ENCODE measurements at regions of chr3 and their contacts with region 1.

Region 1: DNA sequence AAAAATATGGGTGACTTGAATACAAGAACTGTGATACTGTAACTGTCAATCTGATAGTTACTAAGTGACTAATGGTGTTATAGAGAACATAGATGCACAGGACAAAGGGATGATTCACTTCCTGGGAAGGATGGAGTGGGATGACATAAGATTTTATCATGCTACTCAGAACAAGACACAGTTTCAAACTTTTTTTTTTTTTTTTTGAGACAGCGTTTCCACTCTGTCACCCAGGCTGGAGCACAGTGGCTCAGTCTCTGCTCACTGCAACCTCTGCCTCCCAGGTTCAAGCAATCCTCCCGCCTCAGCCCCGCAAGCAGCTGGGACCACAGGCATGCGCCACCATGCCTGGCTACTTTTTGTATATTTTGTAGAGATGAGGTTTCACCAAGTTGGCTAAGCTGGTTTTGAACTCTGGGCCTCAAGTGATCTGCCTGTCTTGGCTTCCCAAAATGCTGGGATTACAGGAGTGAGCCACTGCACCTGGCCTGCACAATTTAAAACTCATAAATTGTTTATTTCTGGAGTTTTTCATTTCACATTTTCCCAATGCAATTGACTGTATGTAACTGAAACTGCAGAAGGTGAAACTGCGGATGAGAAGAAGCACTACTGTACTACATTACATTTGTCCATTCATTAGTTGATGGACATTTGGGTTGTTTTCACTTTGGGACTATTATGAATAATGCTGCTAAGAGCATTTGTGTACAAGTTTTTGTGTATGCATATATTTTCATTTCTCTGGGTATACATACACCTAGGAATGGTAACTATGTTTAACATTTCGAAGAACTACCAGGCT is 40.6 kb downstream of the ADIPOQ start:
- DNase-seq: peak; percentile 31
- H3K4me3 Mint-ChIP-seq: peak overlapping the region; percentile 54
- H3K27ac Mint-ChIP-seq: peak overlapping the region; percentile 90
- H3K4me1 Mint-ChIP-seq: peaks cover 58% of the 10 kb centered on the region
- H3K27me3 Mint-ChIP-seq: no peaks in the 10 kb centered on the region

Region 2: GRCh38 chr3:186472456-186473008 is 410.6 kb before region 1 on chr3:
- intact Hi-C with region 1: no loop called
- DNase-seq: no peak
- H3K4me3 Mint-ChIP-seq: no peak overlapping the region
- H3K27ac Mint-ChIP-seq: no peak overlapping the region
- H3K4me1 Mint-ChIP-seq: peaks cover 17% of the 10 kb centered on the region
- H3K27me3 Mint-ChIP-seq: peaks cover 5% of the 10 kb centered on the region

Region 3: DNA sequence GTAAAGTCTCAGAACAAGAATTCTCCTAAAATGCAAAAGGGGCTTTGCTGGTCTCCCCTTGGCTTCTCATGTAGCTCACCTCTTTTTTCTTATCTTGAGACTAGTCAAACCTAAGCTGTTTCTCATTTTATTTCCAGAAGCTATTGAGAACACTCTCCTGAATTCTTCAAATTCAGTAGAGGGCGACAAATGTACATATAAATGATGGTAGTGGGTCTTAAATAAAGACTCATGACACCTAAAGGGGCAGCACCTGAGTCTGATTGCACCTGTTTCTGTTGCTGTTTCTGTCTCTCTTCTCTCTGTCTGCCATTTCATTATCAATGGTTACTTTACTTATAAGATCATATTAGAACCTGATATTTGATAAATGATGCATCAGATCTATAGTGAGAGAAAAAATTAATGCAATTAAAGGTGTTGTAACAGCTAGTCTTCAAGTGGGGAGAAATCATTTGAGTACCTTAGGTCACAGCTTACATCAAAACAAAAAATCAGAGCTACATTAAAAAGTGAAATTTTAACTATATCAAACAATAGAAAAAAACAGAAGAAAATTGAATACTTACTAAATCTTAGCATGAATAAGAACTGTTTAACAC is 33.6 kb before region 1 on chr3:
- intact Hi-C with region 1: loop called (anchors 1 kb)
- DNase-seq: no peak
- H3K4me3 Mint-ChIP-seq: no peak overlapping the region
- H3K27ac Mint-ChIP-seq: no peak overlapping the region
- H3K4me1 Mint-ChIP-seq: peaks cover 26% of the 10 kb centered on the region
- H3K27me3 Mint-ChIP-seq: peaks cover 13% of the 10 kb centered on the region

Region 4: DNA sequence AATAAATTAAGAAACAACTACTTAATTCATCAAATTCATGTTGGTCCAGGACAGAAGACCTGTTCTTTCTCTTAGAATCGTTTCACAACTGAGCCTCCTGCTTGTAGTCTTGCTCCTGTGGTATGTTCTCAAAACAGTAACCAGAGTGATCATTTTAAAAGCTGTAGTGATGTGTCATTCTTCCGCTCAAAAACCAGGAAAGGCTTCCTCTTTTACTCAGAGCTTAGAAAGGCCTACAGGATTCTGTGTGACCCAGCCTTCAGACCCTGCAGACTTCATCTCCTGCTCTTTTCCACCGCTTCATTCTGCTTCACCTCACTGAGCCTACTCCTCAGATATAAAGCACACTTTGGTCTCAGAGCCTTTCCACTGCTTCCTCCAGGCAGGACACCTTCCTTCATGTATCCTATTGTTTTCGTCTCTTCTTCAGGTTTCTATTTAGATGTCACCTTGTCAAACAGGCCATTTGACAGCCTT is 70.0 kb after region 1 on chr3:
- intact Hi-C with region 1: loop called (anchors 1 kb)
- DNase-seq: peak; percentile 16
- H3K4me3 Mint-ChIP-seq: peak overlapping the region; percentile 59
- H3K27ac Mint-ChIP-seq: peak overlapping the region; percentile 89
- H3K4me1 Mint-ChIP-seq: peaks cover 83% of the 10 kb centered on the region
- H3K27me3 Mint-ChIP-seq: no peaks in the 10 kb centered on the region

Region 5: DNA sequence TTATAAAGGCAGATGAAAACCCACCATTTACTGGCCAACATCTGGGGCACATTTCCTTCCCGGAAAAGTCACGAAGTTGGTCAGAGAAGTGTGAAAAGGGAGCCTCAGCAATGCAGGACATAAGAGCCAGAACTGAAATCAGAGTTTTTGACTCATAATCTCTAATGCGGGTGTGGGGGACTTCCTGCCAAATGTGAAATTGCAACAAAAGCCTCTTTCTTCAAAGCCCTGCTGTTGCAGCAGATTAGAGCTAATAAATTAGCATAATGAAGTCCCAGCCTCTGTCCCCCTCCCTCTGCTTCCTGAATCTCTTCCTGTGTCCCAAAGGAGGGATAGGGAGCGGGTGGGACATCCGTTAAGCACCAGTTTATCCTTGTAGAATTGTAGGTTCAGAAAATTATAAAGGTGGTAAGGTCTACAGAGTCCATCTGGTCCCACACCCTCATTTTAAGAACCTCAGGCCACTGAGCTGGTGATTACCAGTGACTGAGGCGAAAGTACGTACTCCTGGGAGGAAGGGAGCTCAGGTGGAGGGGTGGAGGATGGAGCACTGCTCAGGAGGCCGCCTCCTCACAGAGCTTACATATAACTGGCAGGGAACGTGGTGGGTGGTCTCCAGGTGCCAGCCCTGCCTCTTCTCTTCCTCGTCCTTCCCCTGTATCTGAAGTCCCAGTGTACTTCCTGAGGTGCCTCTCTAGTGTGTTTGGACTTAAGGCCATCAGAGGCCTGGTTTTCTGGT is 82.2 kb after region 1 on chr3:
- intact Hi-C with region 1: no loop called
- DNase-seq: no peak
- H3K4me3 Mint-ChIP-seq: no peak overlapping the region
- H3K27ac Mint-ChIP-seq: no peak overlapping the region
- H3K4me1 Mint-ChIP-seq: peaks cover 65% of the 10 kb centered on the region
- H3K27me3 Mint-ChIP-seq: no peaks in the 10 kb centered on the region

Region 6: DNA sequence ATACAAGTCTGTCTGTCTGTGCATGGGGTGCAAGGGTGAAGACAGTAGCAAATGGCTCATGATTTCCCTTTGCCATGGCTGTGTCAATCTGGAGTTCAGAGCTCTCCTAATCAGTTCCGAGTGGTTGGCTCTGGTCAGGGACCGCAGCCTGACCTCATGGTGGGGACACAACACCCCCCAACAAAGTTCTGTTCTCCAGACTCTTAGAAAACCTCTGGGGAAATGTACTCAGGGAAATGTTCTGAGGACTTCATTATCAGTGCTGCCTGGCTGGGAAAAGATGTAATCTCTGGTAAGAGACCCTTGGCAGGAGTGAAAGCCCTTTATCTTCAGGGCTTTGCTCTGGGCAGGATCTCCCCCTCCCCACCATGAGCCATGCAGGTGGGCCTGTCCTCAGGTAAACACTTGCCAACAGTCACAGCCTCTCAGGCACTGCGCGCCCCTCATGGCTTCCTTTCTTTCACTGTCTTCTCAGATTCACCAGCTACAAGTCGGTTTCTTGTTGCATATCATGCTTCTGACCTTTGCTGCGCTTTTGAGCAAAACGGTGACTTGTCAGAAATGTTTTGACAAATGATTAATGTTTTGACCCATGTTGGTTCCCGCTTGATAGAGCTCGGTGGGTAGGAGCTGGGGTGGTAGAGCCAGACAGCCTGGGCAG is 142.7 kb after region 1 on chr3:
- intact Hi-C with region 1: loop called (anchors 1 kb)
- DNase-seq: no peak
- H3K4me3 Mint-ChIP-seq: peak overlapping the region; percentile 85
- H3K27ac Mint-ChIP-seq: peak overlapping the region; percentile 97
- H3K4me1 Mint-ChIP-seq: peaks cover 59% of the 10 kb centered on the region
- H3K27me3 Mint-ChIP-seq: no peaks in the 10 kb centered on the region

Region 7: DNA sequence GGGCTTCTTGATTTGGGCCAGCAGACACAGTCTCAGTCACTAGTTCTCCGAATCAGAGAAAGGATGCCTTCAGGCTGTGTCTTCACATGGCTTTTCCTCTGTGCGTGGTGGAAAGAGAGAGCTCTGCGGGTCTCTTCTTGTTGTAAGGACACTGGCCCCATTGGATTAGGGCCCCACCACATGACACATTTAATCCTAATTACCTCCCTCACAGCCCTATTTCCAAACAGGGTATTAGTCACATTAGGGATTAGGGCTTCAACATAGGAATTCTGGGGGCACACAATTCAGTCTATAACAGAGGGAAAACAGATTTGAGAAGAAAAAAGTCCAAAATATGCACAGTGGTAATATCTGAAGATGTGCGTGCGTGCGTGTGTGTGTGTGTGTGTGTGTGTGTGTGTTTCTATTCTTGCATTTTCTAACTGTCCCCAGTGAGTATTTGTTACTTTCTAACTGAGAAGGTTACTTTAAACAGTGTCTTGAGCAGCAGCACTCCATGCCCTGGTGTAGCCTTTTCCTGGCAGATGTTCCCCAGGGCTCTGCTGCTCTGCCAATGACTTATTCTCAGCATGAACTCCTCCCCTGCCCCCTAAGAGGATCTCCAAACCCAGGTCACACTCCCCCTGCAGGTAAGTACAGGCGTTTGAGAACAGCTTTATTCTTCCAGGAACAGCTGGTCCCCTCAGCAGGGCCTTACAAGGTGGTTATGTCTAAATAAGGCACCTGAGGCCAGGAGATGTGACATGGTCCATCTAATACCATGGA is 183.3 kb after region 1 on chr3:
- intact Hi-C with region 1: no loop called
- DNase-seq: peak; percentile 29
- H3K4me3 Mint-ChIP-seq: no peak overlapping the region
- H3K27ac Mint-ChIP-seq: peak overlapping the region; percentile 67
- H3K4me1 Mint-ChIP-seq: peaks cover 55% of the 10 kb centered on the region
- H3K27me3 Mint-ChIP-seq: no peaks in the 10 kb centered on the region

Region 8: DNA sequence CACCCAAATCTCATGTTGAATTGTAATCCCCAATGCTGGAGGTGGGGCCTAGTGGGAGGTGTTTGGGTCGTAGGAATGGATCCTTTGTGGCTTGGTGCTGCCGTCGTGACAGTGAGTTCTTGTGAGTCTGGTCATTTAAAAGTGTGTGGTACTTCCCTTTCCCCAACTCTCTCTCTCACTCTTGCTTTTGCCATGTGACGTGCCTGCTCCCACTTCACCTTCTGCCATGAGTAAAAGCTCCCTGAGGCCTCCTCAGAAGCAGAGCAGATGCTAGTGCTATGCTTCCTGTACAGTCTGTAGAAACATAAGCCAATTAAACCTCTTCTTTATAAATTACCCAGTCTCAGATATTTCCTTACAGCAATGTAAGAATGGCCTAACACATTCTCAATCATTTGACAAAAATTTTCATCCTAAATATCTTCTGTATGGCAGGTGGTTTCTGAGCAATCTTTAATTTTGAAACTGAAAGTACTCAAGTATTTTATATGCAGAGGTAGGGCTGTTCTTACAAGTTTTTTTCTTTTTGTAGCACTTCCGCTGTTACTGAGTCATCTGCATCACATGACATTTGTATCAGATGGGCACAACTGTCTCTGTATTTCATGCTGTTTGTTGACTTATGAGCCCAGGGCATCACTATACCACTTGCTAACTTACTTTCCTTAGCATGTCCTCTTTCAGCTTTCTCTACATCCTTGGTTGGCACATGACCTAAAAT is 247.4 kb after region 1 on chr3:
- intact Hi-C with region 1: loop called (anchors 1 kb)
- DNase-seq: peak; percentile 47
- H3K4me3 Mint-ChIP-seq: peak overlapping the region; percentile 51
- H3K27ac Mint-ChIP-seq: peak overlapping the region; percentile 91
- H3K4me1 Mint-ChIP-seq: peaks cover 58% of the 10 kb centered on the region
- H3K27me3 Mint-ChIP-seq: no peaks in the 10 kb centered on the region

Region 9: GRCh38 chr3:187352581-187353575 is 469.8 kb after region 1 on chr3:
- intact Hi-C with region 1: no loop called
- DNase-seq: no peak
- H3K4me3 Mint-ChIP-seq: no peak overlapping the region
- H3K27ac Mint-ChIP-seq: no peak overlapping the region
- H3K4me1 Mint-ChIP-seq: no peaks in the 10 kb centered on the region
- H3K27me3 Mint-ChIP-seq: peaks cover 14% of the 10 kb centered on the region

Region 10: DNA sequence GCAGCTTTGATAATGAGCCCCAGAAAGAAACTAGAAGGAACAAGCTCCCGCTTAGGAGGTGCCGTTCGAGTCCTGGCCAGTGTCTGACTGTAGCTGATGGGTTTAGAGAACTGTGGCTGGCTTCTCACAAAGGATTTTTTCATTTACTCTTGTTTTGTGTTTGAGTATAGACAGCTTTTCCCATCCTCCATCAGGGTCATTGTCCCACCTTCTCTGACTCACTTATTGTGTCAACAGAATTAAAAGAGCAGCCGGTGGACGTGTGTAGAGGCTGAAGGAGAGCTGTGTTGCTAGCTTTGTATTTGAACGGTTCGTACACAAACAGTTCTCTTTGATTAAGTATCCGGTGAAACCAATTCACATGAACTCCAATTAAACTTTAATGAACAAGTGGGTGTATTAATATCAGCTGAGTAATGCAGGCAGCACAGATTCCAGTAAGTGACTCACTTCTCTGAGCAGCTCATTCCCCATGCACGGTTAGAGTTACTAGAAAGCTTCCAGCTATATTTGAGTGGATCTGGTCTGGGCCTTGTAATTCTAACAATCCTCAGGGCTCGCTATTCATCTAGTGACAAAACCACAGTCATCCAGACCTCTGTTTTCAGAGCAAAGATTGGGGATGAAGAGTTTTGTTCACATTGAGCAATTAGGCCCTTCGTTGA is 1411.9 kb after region 1 on chr3:
- intact Hi-C with region 1: loop called (anchors 5 kb)
- DNase-seq: no peak
- H3K4me3 Mint-ChIP-seq: no peak overlapping the region
- H3K27ac Mint-ChIP-seq: peak overlapping the region; percentile 33
- H3K4me1 Mint-ChIP-seq: peaks cover 86% of the 10 kb centered on the region
- H3K27me3 Mint-ChIP-seq: no peaks in the 10 kb centered on the region